ENCODE measurements at regions of chr1 and their contacts with region 1.

Region 1: DNA sequence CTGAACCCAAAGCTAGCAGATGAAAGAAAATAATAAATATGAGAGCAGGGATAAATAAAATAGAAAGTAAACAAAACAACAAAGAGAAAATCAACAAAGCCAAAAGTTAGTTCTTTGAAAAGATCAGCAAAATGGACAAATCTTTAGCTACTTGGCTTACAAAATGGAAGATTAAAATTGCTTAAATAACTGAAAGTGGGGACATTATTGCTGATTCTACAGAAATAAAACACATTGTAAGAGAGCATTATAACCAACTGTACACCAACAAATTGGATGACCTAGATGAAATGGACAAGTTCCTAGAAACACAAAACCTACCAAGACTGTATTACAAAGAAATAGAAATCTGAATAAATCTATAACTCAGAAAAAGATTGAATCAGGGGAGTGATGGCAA is 238.3 kb upstream of the C1orf87 start:
- DNase-seq: no peak
- H3K4me3 ChIP-seq: no peak overlapping the region
- H3K27ac ChIP-seq: no peak overlapping the region
- H3K4me1 ChIP-seq: no peaks in the 10 kb centered on the region
- H3K27me3 ChIP-seq: no peaks in the 10 kb centered on the region
- CTCF ChIP-seq: no peak
- EP300 ChIP-seq: no peak
- POLR2A ChIP-seq: no peak

Region 2: DNA sequence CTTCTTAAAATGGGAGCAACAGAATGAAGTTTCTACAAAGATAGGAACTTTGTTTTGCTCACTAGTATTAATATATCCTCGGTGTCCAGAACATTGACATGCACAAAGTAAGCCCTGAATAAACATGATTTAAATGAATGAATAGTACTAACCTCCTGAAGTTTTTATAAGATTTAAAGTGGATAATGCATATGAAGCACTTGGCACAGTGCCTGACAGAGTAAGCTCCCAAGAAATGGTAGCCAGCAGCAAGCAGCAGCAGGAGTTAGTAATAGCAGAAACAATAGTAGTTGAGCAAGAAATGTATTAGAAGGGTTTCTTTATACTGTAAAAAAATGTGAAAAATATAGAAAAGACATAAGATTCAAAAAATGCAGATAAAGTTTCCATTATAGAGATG is 19.8 kb after region 1 on chr1:
- intact Hi-C with region 1: loop called (anchors 1 kb)
- DNase-seq: no peak
- H3K4me3 ChIP-seq: no peak overlapping the region
- H3K27ac ChIP-seq: no peak overlapping the region
- H3K4me1 ChIP-seq: peaks cover 0 to 7% (median 5%) of the 10 kb centered on the region in 4 donors
- H3K27me3 ChIP-seq: no peaks in the 10 kb centered on the region
- CTCF ChIP-seq: no peak
- EP300 ChIP-seq: no peak
- POLR2A ChIP-seq: no peak